Endothelial cell of umbilical vein (primary cell): ENCODE measurements at regions of chr7 and their contacts with region 1.

Region 1: DNA sequence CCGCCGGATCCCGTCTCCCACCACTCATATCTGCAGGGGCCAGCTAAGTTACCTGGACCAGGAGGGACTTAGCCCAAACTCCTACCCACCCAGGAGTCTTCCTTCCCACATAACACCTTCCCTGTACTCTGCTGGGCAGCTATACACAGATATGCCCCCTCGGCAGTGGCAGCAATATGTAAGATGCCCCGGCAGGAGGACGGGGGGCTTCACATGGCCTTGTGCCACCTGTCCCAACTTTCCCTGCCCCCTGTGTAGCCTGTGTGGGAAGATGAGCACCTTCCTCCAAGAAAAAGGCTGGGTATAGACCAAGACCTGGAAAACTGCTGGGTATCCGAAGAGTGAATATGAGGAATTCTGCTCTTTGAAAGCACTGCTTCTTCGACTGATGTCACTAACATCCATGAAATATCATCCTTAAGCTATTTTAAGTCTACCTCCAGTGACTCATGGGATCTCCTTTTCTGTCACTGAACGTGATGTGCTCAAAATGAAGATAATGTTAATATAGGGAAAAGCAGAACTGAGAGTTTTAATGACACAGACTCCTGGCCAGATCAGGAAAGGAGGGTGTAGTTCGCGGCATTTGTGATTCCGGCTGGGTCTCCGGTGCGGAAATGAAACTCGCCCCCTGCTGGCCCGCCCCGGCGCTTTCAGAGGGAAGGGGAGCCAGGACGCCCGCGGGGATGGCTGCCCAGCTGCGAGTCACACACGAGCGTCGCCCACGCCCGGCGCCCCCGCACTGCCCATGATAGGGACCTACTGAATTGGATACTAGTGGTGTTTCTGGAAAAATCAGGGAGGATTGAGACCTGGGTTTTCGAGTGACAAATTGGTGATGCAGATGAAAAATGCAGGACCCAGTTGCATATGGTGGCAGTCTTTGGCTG is 256.9 kb upstream of the NFE2L3 start:
- DNase-seq: peak; percentile 32
- H3K4me3 ChIP-seq: no peak overlapping the region
- H3K27ac ChIP-seq: no peak overlapping the region
- H3K4me1 ChIP-seq: peaks cover 16% of the 10 kb centered on the region
- H3K27me3 ChIP-seq: peaks cover under 1 to 11% of the 10 kb centered on the region in 2 experiments
- CTCF ChIP-seq: peak; percentile 78 to 79
- POLR2A ChIP-seq: no peak

Region 2: DNA sequence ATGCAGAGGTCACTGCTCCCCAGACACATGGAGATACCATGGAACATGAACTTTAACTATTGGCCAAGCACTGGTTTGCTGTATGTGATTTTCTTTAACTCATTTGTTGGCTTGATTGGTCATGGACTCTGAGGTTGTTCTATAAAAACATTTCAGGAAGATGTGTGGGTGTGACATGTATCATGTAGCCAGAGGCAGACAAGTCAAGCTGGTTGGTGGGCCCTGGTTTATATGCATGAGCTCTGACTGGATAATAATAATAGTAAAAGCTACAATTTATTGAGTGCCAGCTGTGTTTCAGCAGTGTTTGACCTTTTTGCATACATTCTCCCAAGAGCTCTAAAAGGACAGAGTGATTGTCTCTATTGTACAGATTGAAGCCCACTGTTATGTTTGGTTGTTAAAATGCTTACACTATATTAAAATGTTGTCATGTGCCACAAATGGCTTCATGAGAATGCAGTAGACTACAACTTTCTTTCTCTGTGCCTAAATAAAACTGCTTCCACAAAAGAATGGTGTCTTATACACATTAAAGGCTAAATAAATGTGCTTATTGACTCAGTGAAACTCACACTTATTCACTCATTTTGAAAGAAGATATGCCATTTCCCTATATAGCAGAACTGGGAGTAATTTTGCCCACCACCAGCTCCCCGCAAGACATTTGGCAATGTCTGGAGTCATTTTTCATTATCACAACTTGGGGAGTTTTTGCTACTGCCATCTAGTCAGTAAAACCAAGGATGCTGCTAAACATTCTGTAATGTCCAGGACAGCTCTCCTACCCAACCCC is 13.2 kb after region 1 on chr7:
- CTCF ChIA-PET with region 1: interaction called, 17 read pairs
- POLR2A ChIA-PET with region 1: no interaction called
- dilution Hi-C with region 1: no loop called
- intact Hi-C with region 1: no loop called
- DNase-seq: no peak
- H3K4me3 ChIP-seq: no peak overlapping the region
- H3K27ac ChIP-seq: no peak overlapping the region
- H3K4me1 ChIP-seq: no peaks in the 10 kb centered on the region
- H3K27me3 ChIP-seq: peaks cover 1 to 3% of the 10 kb centered on the region in 2 experiments
- CTCF ChIP-seq: no peak
- POLR2A ChIP-seq: no peak

Region 3: DNA sequence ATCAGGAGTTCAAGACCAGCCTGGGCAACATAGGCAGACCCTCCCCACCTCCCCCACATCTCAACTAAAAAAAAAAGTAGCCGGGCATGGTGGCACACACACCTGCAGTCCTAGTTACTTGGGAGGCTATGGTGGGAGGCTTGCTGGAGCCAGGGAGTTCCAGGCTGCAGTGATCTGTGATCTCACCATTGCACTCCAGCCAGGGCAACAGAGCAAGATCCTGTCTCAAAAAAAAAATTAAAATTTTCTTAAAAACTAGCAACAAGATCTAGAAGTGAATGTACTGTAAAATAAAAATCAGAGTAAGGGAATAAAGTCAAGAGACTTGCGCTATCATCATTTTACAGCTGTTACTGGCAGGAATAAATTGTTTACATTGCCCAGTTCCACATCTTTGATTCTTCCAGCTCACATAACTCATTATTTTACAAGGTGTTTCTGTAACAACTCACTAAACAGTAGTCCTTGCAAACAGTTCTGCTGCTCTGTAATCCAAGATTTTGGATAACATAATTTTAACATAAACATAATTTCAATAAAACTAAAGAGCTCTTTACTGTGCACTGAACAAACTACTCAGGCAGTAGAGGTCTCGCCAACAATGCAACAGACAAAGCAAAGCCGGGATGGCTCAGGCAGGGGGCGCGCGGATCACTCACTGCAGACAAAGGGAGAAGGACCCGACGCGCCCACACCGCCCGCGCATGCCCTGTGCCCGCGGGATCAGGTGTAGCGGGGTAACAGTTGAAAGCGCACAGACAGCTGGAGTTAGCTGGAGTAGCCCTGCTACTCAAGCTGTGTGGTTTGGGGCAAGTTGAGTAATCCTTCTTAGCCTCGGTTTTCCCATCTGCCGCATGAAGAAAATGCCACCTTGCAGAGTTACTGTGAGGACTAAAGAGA is 183.5 kb after region 1 on chr7:
- CTCF ChIA-PET with region 1: interaction called, 7 read pairs
- POLR2A ChIA-PET with region 1: no interaction called
- dilution Hi-C with region 1: no loop called
- intact Hi-C with region 1: loop called (anchors 5 kb)
- DNase-seq: peak; percentile 45
- H3K4me3 ChIP-seq: no peak overlapping the region
- H3K27ac ChIP-seq: no peak overlapping the region
- H3K4me1 ChIP-seq: no peaks in the 10 kb centered on the region
- H3K27me3 ChIP-seq: peaks cover 27 to 54% of the 10 kb centered on the region in 2 experiments
- CTCF ChIP-seq: peak; percentile 13 to 45
- POLR2A ChIP-seq: no peak

Region 4: GRCh38 chr7:26151953-26152781 is 257.0 kb after region 1 on chr7 and contains the start of gene NFE2L3:
- CTCF ChIA-PET with region 1: no interaction called
- POLR2A ChIA-PET with region 1: no interaction called
- dilution Hi-C with region 1: no loop called
- intact Hi-C with region 1: loop called (anchors 10 kb)
- DNase-seq: peak; percentile 77
- H3K4me3 ChIP-seq: peak within 1 kb of the TSS; percentile 42 to 71 (median 68)
- H3K27ac ChIP-seq: peak within 1 kb of the TSS; percentile 92
- H3K4me1 ChIP-seq: peaks cover 45% of the 10 kb centered on the region
- H3K27me3 ChIP-seq: peaks cover 0 to 4% of the 10 kb centered on the region in 2 experiments
- CTCF ChIP-seq: peak in 1 of 2 donors; percentile 7
- POLR2A ChIP-seq: peak; percentile 46
- total RNA-seq, gene NFE2L3: 28.4 and 40.2 TPM in 2 replicates

Region 5: DNA sequence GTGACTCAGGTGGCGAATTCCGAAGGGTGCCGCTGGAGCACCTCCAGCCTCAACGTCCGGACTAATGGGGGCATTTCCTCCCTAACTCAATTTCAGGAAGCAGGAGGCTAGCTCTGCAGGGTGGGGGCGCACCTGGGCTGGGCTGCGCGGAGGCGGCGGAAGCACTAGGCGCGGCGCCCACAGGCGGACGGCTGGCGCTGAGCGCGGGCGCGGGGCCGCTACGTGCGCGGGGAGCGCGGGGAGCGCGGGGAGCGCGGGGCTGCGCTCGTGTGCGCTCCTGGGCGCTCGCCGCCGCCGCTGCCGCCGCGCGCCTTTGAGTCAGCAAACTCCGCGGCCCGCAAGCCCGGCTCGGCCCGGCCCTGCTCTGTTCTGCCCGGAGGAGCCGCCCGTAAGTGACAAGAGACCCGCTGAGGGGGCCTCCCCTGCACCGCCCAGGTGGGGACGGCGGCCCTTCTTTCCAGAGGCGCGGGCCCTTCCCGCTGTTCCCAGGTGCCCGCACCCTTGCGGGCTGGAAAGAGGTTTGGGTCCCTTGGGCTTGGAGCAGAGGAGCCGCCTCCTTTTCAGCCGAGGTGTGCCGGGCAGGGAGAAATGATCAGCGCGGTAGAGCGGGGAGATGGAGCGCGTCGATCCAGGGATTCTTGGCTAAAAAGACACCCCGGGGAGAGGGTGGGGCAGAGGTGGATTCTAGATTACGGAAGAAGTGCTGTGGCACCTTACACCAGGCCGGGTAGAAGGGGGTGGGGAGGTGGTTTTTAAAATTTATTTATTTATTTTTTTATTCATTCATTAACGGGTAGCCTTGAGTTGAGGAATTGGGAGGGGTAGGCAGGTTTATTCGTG is 396.8 kb after region 1 on chr7 and contains the start of gene SNX10:
- CTCF ChIA-PET with region 1: no interaction called
- POLR2A ChIA-PET with region 1: no interaction called
- dilution Hi-C with region 1: no loop called
- intact Hi-C with region 1: loop called (anchors 2 kb)
- DNase-seq: no peak
- H3K4me3 ChIP-seq: peak within 1 kb of the TSS; percentile 33 to 57 (median 40)
- H3K27ac ChIP-seq: no peak within 1 kb of the TSS
- H3K4me1 ChIP-seq: peaks cover 5% of the 10 kb centered on the region
- H3K27me3 ChIP-seq: peaks cover 0 to 3% of the 10 kb centered on the region in 2 experiments
- CTCF ChIP-seq: peak in 1 of 2 donors; percentile 7
- POLR2A ChIP-seq: no peak
- total RNA-seq, gene SNX10: 0.80 and 1.2 TPM in 2 replicates

Region 6: GRCh38 chr7:26507108-26507987 is 612.2 kb after region 1 on chr7:
- CTCF ChIA-PET with region 1: interaction called, 3 read pairs
- POLR2A ChIA-PET with region 1: no interaction called
- dilution Hi-C with region 1: no loop called
- intact Hi-C with region 1: loop called (anchors 5 kb)
- DNase-seq: peak; percentile 25
- H3K4me3 ChIP-seq: no peak overlapping the region
- H3K27ac ChIP-seq: no peak overlapping the region
- H3K4me1 ChIP-seq: no peaks in the 10 kb centered on the region
- H3K27me3 ChIP-seq: peaks cover 10% of the 10 kb centered on the region in 2 experiments
- CTCF ChIP-seq: peak; percentile 30 to 52
- POLR2A ChIP-seq: no peak